GM10248 (cell line): ENCODE measurements at regions of chr1 and their contacts with region 1.

Region 1: GRCh38 chr1:2141036-2141435 is 53.5 kb downstream of the FAAP20 start:
- DNase-seq: no peak
- CTCF ChIP-seq: no peak

Region 2: DNA sequence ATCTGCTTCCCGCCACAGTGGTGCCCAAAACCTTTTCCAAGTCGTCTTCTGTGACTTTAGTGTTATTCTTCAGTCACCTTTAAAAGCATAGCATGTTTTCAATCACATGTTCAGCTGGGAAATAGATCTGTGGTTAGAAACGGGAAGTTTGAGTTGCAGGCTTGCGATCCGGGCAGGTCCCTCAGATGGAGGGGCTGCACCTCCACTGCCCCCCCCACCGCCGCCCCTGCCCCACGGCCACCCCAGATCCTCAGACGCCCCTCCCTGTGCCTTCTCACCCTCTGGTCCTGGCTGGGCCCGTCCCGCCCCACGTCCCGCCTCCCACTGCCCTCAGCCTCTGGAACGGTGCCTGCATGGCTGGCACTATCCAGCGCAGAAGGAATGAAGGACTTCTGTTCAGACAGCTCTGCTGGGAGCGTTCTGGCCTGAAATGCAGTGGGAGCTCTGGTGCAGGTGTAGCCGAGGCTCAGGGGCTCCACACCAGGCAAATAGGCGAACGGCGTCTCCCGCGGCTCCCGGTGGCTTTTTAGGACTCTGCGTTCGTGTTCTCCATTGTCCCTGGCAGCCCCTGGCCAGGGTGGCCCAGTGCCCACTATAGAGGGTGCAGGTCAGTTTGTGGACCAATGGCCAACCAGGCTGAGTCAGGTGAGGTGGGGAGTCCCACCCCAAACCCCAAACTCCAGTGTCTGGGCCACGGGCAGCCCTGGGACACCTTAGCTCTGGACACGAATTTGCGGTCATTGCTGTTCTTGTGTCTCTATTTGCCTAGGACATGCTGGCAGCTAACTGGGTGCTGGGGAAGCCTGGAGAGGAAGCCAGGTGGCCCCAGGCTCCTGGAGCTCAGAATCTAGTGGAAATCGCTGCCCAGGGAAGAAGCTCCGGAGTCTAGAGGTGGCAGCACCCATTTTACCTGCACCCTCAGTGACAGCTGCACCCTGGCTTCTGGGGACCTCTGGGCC is 13.6 kb before region 1 on chr1:
- CTCF ChIA-PET with region 1: interaction called, 12 read pairs
- POLR2A ChIA-PET with region 1: no interaction called
- DNase-seq: no peak
- CTCF ChIP-seq: no peak

Region 3: GRCh38 chr1:2163205-2163604 is 22.2 kb after region 1 on chr1:
- CTCF ChIA-PET with region 1: interaction called, 10 read pairs
- POLR2A ChIA-PET with region 1: no interaction called
- DNase-seq: no peak
- CTCF ChIP-seq: no peak